Activated T-helper 1 cell treated with anti-CD3 and anti-CD28 coated beads, Interleukin-12 subunit alpha, Interleukin-12 subunit beta, Interleukin-2, Interleukin-4 antibody, amounts not matched to agents 30 ng/mL and 10 ng/mL and 1 ng/mL, durations not matched to agents 14 hours and 24 hours and 36 hours (primary cell): ENCODE measurements at regions of chr15 and their contacts with region 1.

Region 1: GRCh38 chr15:100111103-100112060 is 230.4 kb downstream of the ADAMTS17 start:
- DNase-seq: peak; percentile 24
- H3K4me3 Mint-ChIP-seq: peak overlapping the region; percentile 28
- H3K27ac Mint-ChIP-seq: peak overlapping the region; percentile 93
- H3K4me1 Mint-ChIP-seq: peaks cover 30% of the 10 kb centered on the region
- H3K27me3 Mint-ChIP-seq: peaks cover 2% of the 10 kb centered on the region

Region 2: GRCh38 chr15:100060276-100061255 is 50.8 kb before region 1 on chr15:
- intact Hi-C with region 1: no loop called
- DNase-seq: no peak
- H3K4me3 Mint-ChIP-seq: no peak overlapping the region
- H3K27ac Mint-ChIP-seq: no peak overlapping the region
- H3K4me1 Mint-ChIP-seq: no peaks in the 10 kb centered on the region
- H3K27me3 Mint-ChIP-seq: no peaks in the 10 kb centered on the region

Region 3: GRCh38 chr15:100141311-100142001 is 30.1 kb after region 1 on chr15:
- intact Hi-C with region 1: no loop called
- DNase-seq: no peak
- H3K4me3 Mint-ChIP-seq: no peak overlapping the region
- H3K27ac Mint-ChIP-seq: no peak overlapping the region
- H3K4me1 Mint-ChIP-seq: no peaks in the 10 kb centered on the region
- H3K27me3 Mint-ChIP-seq: no peaks in the 10 kb centered on the region

Region 4: DNA sequence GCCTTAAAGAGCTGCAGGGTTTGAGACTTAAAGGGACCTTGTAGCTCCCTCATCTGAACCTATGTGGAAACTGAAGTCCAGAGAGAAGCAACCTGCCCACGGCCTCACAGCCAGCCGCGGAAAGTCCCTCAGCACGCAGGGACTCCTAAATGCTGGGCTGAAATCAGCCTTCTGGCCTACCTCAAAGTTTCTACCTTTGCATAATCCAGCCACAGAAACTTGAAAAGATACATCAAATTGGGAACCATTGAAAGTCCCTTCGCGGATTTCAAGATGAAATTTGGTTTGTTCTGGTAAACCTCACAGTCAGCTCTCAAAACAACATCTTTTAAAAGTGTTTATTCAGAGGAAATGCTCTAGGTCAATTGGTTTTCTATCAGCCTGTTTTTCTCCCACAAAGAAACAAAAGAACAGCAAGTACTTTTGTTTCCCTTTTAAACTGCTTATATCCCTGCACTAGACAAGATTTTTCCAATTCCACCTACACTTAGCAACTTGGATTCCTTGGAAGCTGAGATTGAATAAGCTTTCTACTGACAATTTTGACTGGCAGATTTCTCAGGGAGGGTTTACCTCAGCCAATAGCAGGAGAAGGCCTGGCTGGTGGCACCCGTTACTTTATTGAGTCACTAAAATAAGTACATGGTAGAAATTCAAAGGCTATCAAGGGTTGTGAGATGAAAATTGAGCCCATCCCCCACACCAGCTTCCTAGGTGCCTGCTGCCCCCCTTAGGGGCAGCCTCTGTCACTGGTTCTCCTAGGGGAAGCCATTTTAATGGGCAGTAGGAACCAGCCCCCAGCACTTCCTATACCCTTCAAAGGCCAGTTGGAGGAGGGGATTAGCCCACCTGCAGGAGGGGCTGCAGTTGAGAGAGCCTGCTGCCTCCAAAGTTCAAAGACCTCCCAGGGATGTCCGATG is 59.2 kb after region 1 on chr15:
- intact Hi-C with region 1: loop called (anchors 1 kb)
- DNase-seq: peak; percentile 43
- H3K4me3 Mint-ChIP-seq: no peak overlapping the region
- H3K27ac Mint-ChIP-seq: peak overlapping the region; percentile 83
- H3K4me1 Mint-ChIP-seq: peaks cover 15% of the 10 kb centered on the region
- H3K27me3 Mint-ChIP-seq: peaks cover 1% of the 10 kb centered on the region